Naive thymus-derived CD4-positive, alpha-beta T cell (primary cell): ENCODE measurements at regions of chr19 and their contacts with region 1.

Region 1: DNA sequence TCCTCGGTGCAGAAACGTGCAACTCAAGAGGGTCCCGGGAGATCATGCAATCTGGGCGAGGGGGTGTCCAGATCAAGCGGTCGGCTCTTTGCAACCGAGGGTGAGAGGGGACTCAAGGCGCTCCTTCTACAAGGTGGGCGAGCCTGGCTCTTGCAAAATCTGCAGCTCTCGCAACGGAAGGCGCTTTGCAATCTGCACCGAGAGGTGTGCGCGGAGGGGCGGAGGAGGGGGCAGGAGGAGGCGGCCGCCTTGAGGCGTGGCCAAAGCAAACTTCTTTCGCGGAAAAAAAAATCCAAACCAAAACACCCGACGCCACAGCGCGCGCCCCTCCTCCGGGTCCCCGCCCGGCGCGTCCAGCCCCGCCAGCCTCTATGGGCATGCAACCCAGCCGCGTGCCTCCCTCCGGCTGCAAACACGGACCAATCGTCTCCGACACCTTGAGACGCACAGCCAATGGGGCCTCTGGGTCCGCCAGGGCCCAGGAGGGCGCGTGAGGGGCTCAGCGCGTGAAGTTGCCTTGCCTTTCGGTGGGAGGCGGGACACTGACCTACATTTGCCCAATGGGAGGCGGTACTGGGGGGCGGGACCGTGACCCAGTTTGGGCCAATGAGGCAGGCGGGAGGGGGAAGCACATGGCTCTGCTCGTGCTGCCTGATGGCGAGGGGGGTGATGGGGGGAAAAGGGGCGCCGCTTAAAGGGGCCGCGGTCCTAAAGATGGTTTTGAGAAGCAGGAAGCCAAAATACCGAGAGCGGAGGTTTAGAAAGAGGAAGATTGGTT is at the start of gene DBP:
- DNase-seq: peak; percentile 91 to 100 (median 100)
- ATAC-seq: peak; percentile 83
- H3K4me3 ChIP-seq: peak within 1 kb of the TSS; percentile 89
- H3K4me3 Mint-ChIP-seq: peak within 1 kb of the TSS; percentile 87 to 100 (median 98)
- H3K27ac ChIP-seq: peak within 1 kb of the TSS; percentile 90
- H3K27ac Mint-ChIP-seq: peak within 1 kb of the TSS; percentile 97 to 100 (median 98)
- H3K4me1 ChIP-seq: peaks cover 33 to 38% of the 10 kb centered on the region in 2 donors
- H3K4me1 Mint-ChIP-seq: peaks cover 13 to 46% (median 41%) of the 10 kb centered on the region in 7 donors
- H3K27me3 ChIP-seq: no peaks in the 10 kb centered on the region
- H3K27me3 Mint-ChIP-seq: peaks cover 0 to 8% (median 0%) of the 10 kb centered on the region in 5 donors
- total RNA-seq, gene DBP: 11.9 to 79.9 (median 33.2) TPM

Region 2: GRCh38 chr19:48321622-48322591 is 315.5 kb before region 1 on chr19:
- CTCF ChIA-PET with region 1: no interaction called
- POLR2A ChIA-PET with region 1: interaction called, 3 read pairs
- intact Hi-C with region 1: loop called in 1 of 2 experiments (anchors 2 kb)
- DNase-seq: peak; percentile 99 to 100 (median 100)
- ATAC-seq: peak; percentile 87
- H3K4me3 ChIP-seq: peak overlapping the region; percentile 79
- H3K4me3 Mint-ChIP-seq: peak overlapping the region; percentile 90 to 99 (median 96)
- H3K27ac ChIP-seq: peak overlapping the region; percentile 100
- H3K27ac Mint-ChIP-seq: peak overlapping the region; percentile 96 to 100 (median 99)
- H3K4me1 ChIP-seq: peaks cover 45 to 47% of the 10 kb centered on the region in 2 donors
- H3K4me1 Mint-ChIP-seq: peaks cover 36 to 63% (median 51%) of the 10 kb centered on the region in 7 donors
- H3K27me3 ChIP-seq: no peaks in the 10 kb centered on the region
- H3K27me3 Mint-ChIP-seq: peaks cover 0 to 2% (median 0%) of the 10 kb centered on the region in 5 donors

Region 3: DNA sequence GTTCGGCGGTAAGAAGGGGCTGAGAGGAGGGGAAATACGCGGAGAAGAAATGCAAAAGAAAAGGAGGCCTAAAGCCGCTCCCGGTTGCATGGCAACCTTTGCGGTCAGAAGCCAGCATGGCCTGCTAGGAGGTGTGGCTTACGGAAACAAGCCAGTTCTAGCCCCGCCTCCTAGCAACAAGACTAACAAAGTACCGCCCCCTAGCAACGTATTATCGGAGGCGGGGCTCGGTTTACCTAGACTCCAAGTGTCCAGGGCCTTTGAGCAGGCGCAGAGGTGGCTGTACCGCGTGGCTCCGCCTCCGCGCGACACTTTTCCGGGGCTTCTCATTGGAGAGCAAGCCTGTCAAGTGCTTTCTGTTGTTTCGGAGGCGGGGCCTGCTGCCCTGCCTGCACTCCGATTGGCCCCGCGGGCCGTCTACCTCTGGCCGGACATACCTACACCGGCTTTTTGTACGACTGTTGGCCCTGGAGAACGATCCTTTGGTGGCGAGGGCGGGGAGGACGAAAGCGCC is 168.5 kb before region 1 on chr19:
- CTCF ChIA-PET with region 1: no interaction called
- POLR2A ChIA-PET with region 1: no interaction called
- intact Hi-C with region 1: loop called (anchors 1 kb)
- DNase-seq: peak; percentile 93 to 100 (median 100)
- ATAC-seq: peak; percentile 93
- H3K4me3 ChIP-seq: peak overlapping the region; percentile 93
- H3K4me3 Mint-ChIP-seq: peak overlapping the region; percentile 81 to 96 (median 92)
- H3K27ac ChIP-seq: peak overlapping the region; percentile 86
- H3K27ac Mint-ChIP-seq: peak overlapping the region; percentile 85 to 96 (median 90)
- H3K4me1 ChIP-seq: peaks cover 7 to 15% of the 10 kb centered on the region in 2 donors
- H3K4me1 Mint-ChIP-seq: peaks cover 0 to 30% (median 18%) of the 10 kb centered on the region in 7 donors
- H3K27me3 ChIP-seq: no peaks in the 10 kb centered on the region
- H3K27me3 Mint-ChIP-seq: no peaks in the 10 kb centered on the region

Region 4: DNA sequence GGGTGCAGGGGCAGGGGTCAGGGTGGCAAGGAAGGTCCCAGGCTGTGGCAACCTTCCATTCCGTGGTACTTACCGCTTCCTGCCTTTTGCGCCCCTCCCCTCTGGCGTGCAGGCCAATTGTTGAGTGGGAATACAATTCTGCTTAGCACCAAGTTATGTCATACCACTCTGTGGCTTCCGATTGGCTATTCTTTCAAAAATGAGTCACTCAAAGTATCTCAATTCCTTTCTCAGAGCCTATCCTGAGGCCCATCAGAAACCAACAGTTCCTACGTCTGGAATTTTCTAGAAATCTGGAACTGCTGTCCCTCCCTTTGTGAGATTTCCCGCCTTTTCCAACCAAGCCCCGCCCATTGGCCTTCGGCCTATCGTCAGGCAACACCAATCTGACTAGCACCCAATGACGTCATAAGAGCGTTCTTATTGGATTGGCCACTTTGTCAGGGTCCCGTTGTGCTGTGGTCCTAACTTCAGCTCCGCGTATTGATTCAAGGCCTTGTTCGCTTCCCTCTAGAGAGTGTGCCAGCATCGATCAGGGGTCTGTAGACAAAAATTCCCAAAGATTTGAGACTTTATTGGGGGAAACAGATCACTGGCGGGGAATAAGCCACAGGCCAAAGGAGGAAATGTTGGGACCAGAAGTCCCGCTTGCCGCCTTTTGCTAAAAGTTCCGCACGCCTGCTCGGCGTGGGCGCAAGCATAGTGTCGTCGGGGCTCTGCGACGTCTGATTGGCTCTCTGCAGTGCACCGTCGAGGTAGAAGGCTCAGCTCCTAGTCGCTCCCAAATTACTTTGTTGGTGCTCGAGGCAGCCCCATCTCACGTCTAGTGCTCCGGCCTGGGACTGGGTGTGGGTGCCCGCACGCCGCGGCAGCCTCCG is 23.7 kb after region 1 on chr19:
- CTCF ChIA-PET with region 1: no interaction called
- POLR2A ChIA-PET with region 1: interaction called, 4 read pairs
- intact Hi-C with region 1: loop called in 1 of 2 experiments (anchors 1 kb)
- DNase-seq: peak; percentile 51 to 90 (median 86)
- ATAC-seq: peak; percentile 95
- H3K4me3 ChIP-seq: peak overlapping the region; percentile 28
- H3K4me3 Mint-ChIP-seq: peak overlapping the region; percentile 63 to 86 (median 80)
- H3K27ac ChIP-seq: peak overlapping the region; percentile 72
- H3K27ac Mint-ChIP-seq: peak overlapping the region; percentile 17 to 98 (median 94)
- H3K4me1 ChIP-seq: peaks cover 6 to 9% of the 10 kb centered on the region in 2 donors
- H3K4me1 Mint-ChIP-seq: peaks cover 7 to 16% (median 10%) of the 10 kb centered on the region in 7 donors
- H3K27me3 ChIP-seq: no peaks in the 10 kb centered on the region
- H3K27me3 Mint-ChIP-seq: peaks cover 0 to 11% (median 0%) of the 10 kb centered on the region in 5 donors

Region 5: GRCh38 chr19:48738557-48739399 is 101.4 kb after region 1 on chr19:
- CTCF ChIA-PET with region 1: no interaction called
- POLR2A ChIA-PET with region 1: no interaction called
- intact Hi-C with region 1: no loop called
- DNase-seq: peak; percentile 73 to 95 (median 84)
- ATAC-seq: peak; percentile 97
- H3K4me3 ChIP-seq: peak overlapping the region; percentile 53
- H3K4me3 Mint-ChIP-seq: peak overlapping the region in 9 of 10 donors; percentile 48 to 74 (median 66)
- H3K27ac ChIP-seq: peak overlapping the region; percentile 41
- H3K27ac Mint-ChIP-seq: peak overlapping the region in 7 of 9 donors; percentile 17 to 68 (median 52)
- H3K4me1 ChIP-seq: peaks cover 4 to 26% of the 10 kb centered on the region in 2 donors
- H3K4me1 Mint-ChIP-seq: peaks cover 7 to 22% (median 17%) of the 10 kb centered on the region in 7 donors
- H3K27me3 ChIP-seq: no peaks in the 10 kb centered on the region
- H3K27me3 Mint-ChIP-seq: peaks cover 0 to 20% (median 0%) of the 10 kb centered on the region in 5 donors

Region 6: DNA sequence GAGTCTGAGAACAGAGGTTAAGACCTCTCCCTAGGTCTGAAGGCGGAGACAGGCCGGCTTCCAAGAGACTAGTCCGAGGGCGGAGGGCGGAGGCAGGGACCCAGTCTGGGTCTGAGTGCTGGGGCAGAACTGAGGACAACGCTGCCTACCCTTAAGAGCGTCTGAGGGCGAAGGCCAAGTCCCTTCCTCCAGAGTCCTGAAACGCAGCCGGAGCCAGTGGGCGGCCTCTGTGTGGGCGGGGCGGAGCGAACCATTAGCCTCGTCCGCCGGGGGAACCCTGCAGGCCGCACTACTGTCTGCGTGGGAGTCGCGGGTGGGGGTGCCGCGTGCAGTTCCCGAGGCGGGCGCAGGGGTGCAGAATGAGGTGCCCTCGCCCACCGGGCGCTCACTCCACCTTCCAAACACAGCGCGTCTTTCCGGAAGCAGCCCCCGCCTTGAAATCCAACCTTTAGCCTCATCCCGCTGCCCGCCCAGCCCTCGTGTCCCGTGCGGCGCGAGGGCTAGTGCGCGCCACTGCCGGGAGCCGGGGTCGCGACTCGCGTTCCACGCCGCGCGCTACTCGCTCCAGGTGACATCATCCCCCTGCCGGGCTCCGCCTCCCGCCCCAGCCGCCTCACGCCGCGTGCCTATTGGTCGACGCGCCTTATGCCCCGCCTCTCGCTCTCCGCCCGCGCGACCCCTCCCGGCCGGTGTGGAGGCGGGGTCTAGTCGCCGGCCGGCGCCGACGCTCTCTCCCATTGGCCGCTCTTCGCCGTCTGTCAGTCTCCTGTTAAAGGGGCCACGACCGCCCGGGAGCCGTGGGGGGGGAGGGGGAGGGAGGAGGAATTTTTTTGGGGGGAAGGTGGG is 481.4 kb after region 1 on chr19 and contains the start of gene C19orf73:
- CTCF ChIA-PET with region 1: no interaction called
- POLR2A ChIA-PET with region 1: no interaction called
- intact Hi-C with region 1: loop called (anchors 2 to 10 kb)
- DNase-seq: peak; percentile 93 to 98 (median 97)
- ATAC-seq: peak; percentile 91
- H3K4me3 ChIP-seq: peak within 1 kb of the TSS; percentile 83
- H3K4me3 Mint-ChIP-seq: peak within 1 kb of the TSS; percentile 83 to 91 (median 88)
- H3K27ac ChIP-seq: peak within 1 kb of the TSS; percentile 92
- H3K27ac Mint-ChIP-seq: peak within 1 kb of the TSS; percentile 89 to 95 (median 93)
- H3K4me1 ChIP-seq: peaks cover 13 to 16% of the 10 kb centered on the region in 2 donors
- H3K4me1 Mint-ChIP-seq: peaks cover 25 to 43% (median 39%) of the 10 kb centered on the region in 7 donors
- H3K27me3 ChIP-seq: no peaks in the 10 kb centered on the region
- H3K27me3 Mint-ChIP-seq: peaks cover 0 to 27% (median 0%) of the 10 kb centered on the region in 5 donors
- total RNA-seq, gene C19orf73: 1.3 to 2.8 (median 2.2) TPM

Region 7: DNA sequence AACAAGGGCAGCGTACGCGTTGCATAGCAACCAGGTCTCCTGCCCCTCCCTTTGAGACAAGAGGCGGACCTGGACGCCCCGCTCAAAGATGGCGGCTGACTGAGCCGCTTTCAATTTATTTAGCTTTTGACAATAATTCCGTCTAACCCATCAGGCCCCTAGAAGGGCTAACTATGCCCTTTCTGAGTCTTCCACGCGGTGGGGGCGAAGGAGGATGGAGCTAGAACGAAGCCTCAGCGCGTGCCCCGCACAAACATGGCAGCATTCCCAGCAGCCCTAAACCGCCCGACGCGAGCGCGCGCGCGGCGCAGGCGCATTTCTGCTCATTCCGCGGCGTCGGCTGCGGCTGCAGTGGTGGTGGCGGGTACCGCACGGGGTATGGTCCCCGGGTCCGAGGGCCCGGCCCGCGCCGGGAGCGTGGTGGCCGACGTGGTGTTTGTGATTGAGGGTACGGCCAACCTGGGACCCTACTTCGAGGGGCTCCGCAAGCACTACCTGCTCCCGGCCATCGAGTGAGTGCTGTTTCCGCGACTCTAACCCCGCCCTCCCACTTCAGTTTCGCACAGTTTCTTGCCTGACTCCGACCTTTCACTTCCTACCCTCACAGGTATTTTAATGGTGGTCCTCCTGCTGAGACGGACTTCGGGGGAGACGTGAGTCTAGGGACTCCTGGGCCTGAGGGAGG is 1180.7 kb after region 1 on chr19 and contains the start of gene MED25:
- CTCF ChIA-PET with region 1: no interaction called
- POLR2A ChIA-PET with region 1: no interaction called
- intact Hi-C with region 1: loop called in 1 of 2 experiments (anchors 5 kb)
- DNase-seq: peak; percentile 87 to 96 (median 94)
- ATAC-seq: peak; percentile 65
- H3K4me3 ChIP-seq: peak within 1 kb of the TSS; percentile 91
- H3K4me3 Mint-ChIP-seq: peak within 1 kb of the TSS; percentile 94 to 100 (median 98)
- H3K27ac ChIP-seq: peak within 1 kb of the TSS; percentile 88
- H3K27ac Mint-ChIP-seq: peak within 1 kb of the TSS; percentile 96 to 100 (median 100)
- H3K4me1 ChIP-seq: peaks cover 11 to 17% of the 10 kb centered on the region in 2 donors
- H3K4me1 Mint-ChIP-seq: peaks cover 20 to 51% (median 39%) of the 10 kb centered on the region in 7 donors
- H3K27me3 ChIP-seq: no peaks in the 10 kb centered on the region
- H3K27me3 Mint-ChIP-seq: no peaks in the 10 kb centered on the region
- total RNA-seq, gene MED25: 36.8 to 75.2 (median 55.4) TPM